PC-3 (cell line): ENCODE measurements at regions of chr2 and their contacts with region 1.

Region 1: GRCh38 chr2:20350753-20351554 is at the start of gene PUM2:
- DNase-seq: peak; percentile 98
- ATAC-seq: peak; percentile 77
- H3K4me3 ChIP-seq: peak within 1 kb of the TSS; percentile 92
- H3K27ac ChIP-seq: peak within 1 kb of the TSS; percentile 87
- H3K4me1 ChIP-seq: peaks cover 35% of the 10 kb centered on the region
- H3K27me3 ChIP-seq: no peaks in the 10 kb centered on the region
- CTCF ChIP-seq: no peak
- total RNA-seq, gene PUM2: 14.9 and 25.3 TPM in 2 replicates

Region 2: DNA sequence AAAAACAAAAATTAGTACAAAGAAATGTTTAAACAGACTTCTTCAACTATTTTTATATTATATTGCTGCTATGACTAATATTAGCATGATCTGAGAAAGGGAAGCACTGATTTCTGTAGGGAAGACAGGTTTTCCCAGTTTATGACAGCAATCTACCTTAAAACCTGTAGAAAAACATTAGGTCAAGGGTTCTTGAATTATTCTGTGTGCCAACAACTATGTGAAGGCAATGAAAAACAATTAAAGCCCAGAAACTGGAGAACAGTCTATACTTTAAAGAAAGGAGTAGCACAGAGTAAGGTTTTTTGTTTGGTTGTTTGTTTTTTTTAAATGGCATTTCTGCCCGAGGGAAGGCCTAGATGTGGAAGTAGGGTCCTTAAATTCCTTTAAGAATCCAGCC is 23.6 kb before region 1 on chr2:
- CTCF ChIA-PET with region 1: no interaction called
- POLR2A ChIA-PET with region 1: no interaction called
- intact Hi-C with region 1: loop called (anchors 1 kb)
- DNase-seq: peak; percentile 84
- ATAC-seq: peak; percentile 66
- H3K4me3 ChIP-seq: peak overlapping the region; percentile 30; the same call in 1 of the 2 replicates
- H3K27ac ChIP-seq: peak overlapping the region; percentile 73
- H3K4me1 ChIP-seq: peaks cover 25% of the 10 kb centered on the region
- H3K27me3 ChIP-seq: no peaks in the 10 kb centered on the region
- CTCF ChIP-seq: no peak

Region 3: DNA sequence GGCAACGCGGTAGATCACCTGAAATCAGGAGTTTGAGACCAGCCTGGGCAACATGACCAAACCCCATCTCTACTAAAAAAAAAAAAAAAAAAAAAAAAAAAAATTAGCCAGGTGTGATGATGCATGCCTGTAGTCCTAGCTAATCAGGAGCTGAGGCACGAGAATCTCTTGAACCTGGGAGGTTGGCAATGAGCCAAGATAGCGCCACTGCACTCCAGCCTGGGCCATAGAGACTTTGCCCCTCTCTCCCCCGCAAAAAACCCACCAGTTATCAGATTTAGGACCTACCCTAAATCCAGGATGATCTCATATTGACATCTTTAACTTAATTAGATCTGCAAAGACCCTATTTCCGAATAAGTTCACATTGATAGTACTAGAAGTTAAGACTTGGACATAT is 501.2 kb after region 1 on chr2:
- CTCF ChIA-PET with region 1: no interaction called
- POLR2A ChIA-PET with region 1: no interaction called
- intact Hi-C with region 1: no loop called
- DNase-seq: no peak
- ATAC-seq: no peak
- H3K4me3 ChIP-seq: no peak overlapping the region
- H3K27ac ChIP-seq: no peak overlapping the region
- H3K4me1 ChIP-seq: no peaks in the 10 kb centered on the region
- H3K27me3 ChIP-seq: peaks cover 46% of the 10 kb centered on the region
- CTCF ChIP-seq: no peak